HEK293 (cell line): ENCODE measurements at regions of chr1 and their contacts with region 1.

Region 1: GRCh38 chr1:155084722-155085503 is 6.3 kb downstream of the EFNA3 start:
- H3K4me3 ChIP-seq: peak overlapping the region; percentile 78
- H3K27ac ChIP-seq: peak overlapping the region; percentile 61; the same call in 1 of the 2 replicates
- H3K4me1 ChIP-seq: peaks cover 10% of the 10 kb centered on the region
- CTCF ChIP-seq: peak; percentile 97

Region 2: DNA sequence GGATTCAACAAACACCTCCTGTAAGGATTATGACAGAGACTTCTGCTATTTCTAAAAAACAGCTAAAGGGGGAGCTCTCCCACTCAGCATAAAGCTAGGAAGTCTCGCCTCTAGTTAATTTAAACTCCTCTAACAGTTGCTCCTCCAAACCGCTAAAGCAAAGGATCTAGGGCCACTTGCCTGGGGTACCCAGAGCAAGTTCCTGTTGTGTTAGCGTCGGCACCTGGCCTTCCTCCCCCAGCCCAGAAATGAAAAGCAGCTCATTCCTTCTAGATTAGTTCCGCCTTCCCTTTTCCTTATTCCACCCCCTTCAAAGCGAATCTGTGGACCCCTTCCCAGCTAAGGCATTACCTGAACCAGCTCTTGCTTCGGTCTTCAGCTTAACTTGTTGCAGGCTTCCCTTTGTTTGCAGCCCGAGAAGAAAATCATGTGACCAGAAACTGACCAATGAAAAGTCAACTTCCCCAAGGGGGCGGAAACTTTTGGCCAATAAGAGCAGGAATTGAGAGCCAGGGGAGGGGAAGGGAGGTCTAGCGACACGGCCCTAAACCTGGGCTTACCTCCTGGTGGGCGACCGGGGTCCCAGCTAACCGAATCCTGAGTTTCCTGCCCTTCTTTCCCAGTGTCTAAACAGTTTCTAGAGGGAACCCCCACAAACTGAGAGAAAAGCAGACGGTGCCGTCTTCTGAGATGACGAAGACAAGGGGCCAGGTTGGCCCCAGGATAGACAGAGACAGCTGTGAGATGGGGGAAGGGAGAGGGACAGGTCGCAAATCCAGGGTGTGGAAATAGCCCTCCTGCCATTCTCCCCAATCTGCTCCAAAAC is 129.0 kb before region 1 on chr1 and contains the start of gene PBXIP1:
- CTCF ChIA-PET with region 1: interaction called, 10 read pairs
- POLR2A ChIA-PET with region 1: interaction called, 3 read pairs
- H3K4me3 ChIP-seq: peak within 1 kb of the TSS; percentile 59
- H3K27ac ChIP-seq: no peak within 1 kb of the TSS
- H3K4me1 ChIP-seq: peaks cover 5% of the 10 kb centered on the region; the same call in 1 of the 2 replicates
- CTCF ChIP-seq: peak; percentile 20; the same call in 1 of the 2 replicates

Region 3: GRCh38 chr1:155050560-155051341 is 34.2 kb before region 1 on chr1 and contains the start of gene ADAM15:
- CTCF ChIA-PET with region 1: interaction called, 117 read pairs
- POLR2A ChIA-PET with region 1: interaction called, 6 read pairs
- H3K4me3 ChIP-seq: peak within 1 kb of the TSS; percentile 66
- H3K27ac ChIP-seq: peak within 1 kb of the TSS; percentile 78; the same call in 1 of the 2 replicates
- H3K4me1 ChIP-seq: peaks cover 9% of the 10 kb centered on the region
- CTCF ChIP-seq: peak; percentile 99

Region 4: DNA sequence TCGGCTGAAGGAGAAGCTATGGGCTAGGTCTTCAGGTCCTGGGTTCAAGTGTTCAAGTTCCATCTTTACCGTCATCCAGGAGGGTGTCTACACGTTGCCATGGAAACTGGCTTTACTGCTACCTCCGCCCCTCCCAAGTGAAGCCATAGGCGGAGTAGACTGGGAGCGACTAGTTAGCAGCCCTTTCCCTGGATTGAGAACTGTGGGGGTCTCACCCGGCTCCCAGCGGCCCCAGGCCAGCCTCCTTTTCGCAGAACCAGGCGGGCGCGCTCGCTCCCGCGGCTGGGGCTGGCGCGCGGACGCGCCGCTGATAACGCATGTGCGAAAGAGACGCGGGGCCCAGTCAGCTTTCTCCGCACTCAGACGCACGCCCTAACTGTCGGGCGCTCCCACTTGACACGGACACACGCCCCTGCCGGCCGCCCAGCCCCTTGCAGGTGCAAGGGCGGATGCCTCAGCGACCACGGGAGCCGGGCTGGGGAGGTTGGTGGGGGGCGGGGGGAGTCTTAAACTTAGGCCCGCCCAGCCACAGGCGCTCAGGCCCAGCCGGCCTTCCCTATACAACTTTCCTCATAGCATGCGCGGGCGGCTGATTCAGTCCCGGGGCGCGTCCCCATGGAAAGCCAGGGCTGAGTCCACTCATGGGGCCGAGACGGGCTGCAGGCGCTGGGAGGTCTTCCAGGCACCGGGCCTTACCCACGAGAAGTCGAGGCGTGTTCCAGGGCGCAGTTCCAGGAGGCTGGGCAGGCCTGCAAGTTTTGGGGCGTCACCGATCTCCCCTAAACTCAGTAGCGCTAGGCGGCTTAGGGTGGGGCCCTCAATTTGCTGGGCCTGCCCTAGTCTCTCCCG is 14.0 kb before region 1 on chr1:
- CTCF ChIA-PET with region 1: interaction called, 117 read pairs
- POLR2A ChIA-PET with region 1: interaction called, 3 read pairs
- H3K4me3 ChIP-seq: peak overlapping the region; percentile 0; the same call in 1 of the 2 replicates
- H3K27ac ChIP-seq: no peak overlapping the region; the same call in 1 of the 2 replicates
- H3K4me1 ChIP-seq: peaks cover 5% of the 10 kb centered on the region; the same call in 1 of the 2 replicates
- CTCF ChIP-seq: peak; percentile 81

Region 5: GRCh38 chr1:155167166-155168104 is 82.5 kb after region 1 on chr1:
- CTCF ChIA-PET with region 1: interaction called, 439 read pairs
- POLR2A ChIA-PET with region 1: interaction called, 9 read pairs
- H3K4me3 ChIP-seq: peak overlapping the region; percentile 35
- H3K27ac ChIP-seq: no peak overlapping the region; the same call in 1 of the 2 replicates
- H3K4me1 ChIP-seq: no peaks in the 10 kb centered on the region; the same call in 1 of the 2 replicates
- CTCF ChIP-seq: peak; percentile 92